Motor neuron (in vitro differentiated cells): ENCODE measurements at regions of chr1 and their contacts with region 1.

Region 1: GRCh38 chr1:165933446-165934178 is 106.2 kb downstream of the UCK2 start:
- ATAC-seq: no peak
- H3K4me3 ChIP-seq: no peak overlapping the region
- H3K27ac ChIP-seq: no peak overlapping the region
- H3K4me1 ChIP-seq: no peaks in the 10 kb centered on the region

Region 2: DNA sequence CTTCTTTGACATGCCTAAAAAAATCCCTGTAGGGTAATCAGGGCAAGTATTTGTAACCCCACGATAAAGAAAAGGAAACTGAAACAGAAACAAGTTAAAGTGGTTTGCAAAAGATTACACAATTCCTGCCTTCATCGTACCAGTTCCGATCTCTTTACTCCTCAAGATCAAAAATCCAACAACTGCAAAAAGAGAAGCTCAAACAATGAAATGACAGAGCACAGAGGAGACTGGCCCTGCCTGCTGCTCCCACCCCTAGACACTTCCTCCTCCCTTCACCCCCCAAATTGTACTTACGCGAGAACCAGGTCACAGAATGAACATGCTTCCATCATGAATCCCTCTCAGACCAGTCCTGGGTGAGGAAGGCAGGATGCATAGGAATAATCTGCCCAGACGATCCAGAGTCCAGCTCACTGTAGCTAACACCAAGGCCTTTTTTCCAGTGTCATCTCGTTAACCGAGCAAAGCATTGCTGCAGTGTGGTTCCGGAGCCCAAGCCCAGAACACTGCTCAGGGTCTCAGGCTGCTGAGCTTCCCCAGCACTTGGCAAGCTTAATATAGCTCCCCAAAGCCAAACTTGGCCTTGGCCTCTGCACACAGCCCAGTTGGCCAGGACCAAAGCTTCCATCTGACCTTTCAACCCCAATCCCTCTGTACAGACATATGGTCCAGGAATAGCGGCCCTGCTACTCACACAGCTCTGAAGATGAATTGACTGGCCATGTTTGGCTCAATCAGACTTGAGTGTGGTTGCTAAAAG is 509.0 kb before region 1 on chr1:
- in situ Hi-C with region 1: no loop called
- ATAC-seq: peak in 5 of 8 experiments; percentile 20 to 52 (median 51)
- H3K4me3 ChIP-seq: no peak overlapping the region
- H3K27ac ChIP-seq: peak overlapping the region in 1 of 2 donors; percentile 7
- H3K4me1 ChIP-seq: peaks cover 19 to 27% of the 10 kb centered on the region in 2 donors

Region 3: DNA sequence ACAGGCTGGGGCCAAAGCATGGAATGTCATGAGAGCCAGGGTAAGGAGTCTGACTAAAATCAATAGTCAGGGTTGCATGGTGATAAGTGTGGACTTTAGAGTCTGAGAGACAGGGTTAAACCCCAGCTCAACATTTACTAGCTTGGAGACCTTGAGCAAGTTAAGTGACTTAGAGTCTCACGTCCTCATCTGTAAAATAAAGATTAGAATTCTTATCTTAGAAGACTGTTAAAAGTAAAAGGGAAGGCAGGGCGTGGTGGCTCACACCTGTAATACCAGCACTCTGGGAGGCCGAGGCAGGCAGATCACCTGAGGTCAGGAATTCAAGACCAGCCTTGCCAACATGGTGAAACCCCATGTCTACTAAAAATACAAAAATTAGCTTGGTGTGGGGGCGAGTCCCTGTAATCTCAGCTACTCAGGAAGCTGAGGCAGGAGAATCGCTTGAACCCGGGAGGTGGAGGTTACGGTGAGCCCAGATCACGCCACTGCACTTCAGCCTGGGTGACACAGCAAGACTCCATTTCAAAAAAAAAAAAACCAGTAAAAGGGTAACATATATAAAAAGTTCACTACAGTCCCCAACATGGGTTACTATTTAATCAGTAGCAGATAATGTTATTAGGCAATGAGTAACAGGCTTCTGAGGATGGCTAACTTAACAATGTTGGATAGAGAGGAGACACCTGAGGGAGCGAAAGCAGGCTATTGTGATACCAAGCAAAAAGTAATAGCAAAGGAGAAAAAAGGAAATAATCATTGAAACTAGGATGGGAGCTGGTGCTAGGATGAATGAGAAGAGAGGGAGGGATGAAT is 185.8 kb before region 1 on chr1:
- in situ Hi-C with region 1: no loop called
- ATAC-seq: no peak
- H3K4me3 ChIP-seq: no peak overlapping the region
- H3K27ac ChIP-seq: no peak overlapping the region
- H3K4me1 ChIP-seq: no peaks in the 10 kb centered on the region

Region 4: DNA sequence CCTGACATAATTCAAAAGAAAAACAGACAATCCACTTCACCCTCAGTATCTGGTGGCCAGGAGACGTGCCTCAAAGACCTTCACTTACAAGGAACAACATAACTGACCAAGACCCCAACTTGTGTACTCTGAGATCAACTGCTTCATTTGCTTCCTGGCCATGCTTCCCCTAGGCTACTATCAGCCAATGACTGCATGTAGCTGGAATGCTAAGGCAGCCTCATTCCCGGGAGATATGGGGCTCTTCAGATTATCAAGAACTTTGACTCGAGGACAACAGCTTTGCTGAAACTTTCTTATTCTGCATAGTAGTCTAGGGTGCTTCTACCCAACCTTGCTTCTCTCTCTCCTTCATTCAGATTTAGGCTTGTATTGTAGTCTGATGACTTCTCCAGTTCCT is 117.9 kb before region 1 on chr1:
- in situ Hi-C with region 1: no loop called
- ATAC-seq: no peak
- H3K4me3 ChIP-seq: no peak overlapping the region
- H3K27ac ChIP-seq: no peak overlapping the region
- H3K4me1 ChIP-seq: no peaks in the 10 kb centered on the region

Region 5: DNA sequence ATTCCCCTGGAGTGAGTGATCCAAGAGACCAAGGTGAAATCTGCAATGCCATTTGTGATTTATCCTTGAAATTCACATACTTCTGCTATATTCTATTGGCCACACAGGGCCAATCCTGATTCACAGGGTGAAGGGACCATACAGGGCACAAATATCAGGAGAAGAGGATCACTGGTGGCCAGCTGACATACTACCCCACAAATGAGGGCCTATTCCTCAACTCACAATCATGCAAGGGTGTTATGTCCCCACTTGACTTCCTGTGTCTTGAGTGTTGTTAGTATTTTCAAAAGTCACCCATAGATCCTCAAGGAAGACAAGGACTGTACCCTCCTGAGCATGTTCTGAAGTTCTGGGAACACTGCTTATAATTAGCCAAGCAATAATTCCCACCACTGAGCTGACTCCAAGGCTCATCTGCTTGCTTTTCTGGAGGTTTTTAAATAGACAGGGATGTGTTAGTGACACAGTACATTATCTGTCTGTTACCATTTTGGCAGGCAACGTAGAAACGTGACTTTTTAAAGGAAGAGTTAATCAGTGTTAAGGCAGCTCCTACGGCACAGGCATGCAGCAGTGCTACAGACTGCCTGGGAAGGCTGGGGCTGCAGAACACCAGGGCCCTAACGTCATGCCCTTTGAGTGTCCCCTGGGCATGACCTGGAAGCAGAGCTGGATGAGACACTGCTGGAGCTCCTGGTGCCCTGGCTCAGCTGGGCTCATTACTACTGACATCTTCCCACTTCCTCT is 95.8 kb after region 1 on chr1:
- in situ Hi-C with region 1: no loop called
- ATAC-seq: no peak
- H3K4me3 ChIP-seq: no peak overlapping the region
- H3K27ac ChIP-seq: no peak overlapping the region
- H3K4me1 ChIP-seq: peaks cover 0 to 12% of the 10 kb centered on the region in 2 donors

Region 6: DNA sequence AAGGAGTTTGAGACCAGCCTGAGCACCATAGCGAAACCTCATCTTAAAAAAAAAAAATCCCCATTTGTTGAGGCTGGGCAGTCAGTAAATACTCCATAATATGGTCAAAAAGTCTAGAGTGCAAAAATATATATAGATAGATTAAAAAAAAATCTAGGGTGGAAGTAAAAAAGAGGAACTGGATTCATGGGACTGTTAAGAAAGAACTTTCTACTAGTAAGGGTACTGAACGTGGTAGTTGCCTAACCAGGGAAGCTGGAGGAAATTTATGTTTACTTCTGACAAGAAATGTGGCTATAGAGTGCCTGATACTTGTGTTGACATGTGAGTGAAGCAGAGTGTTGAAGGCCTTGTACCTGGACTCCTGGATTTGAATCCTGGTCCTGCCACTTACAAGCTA is 499.0 kb after region 1 on chr1:
- in situ Hi-C with region 1: loop called in 2 of 9 experiments (anchors 10 to 25 kb)
- ATAC-seq: no peak
- H3K4me3 ChIP-seq: no peak overlapping the region
- H3K27ac ChIP-seq: no peak overlapping the region
- H3K4me1 ChIP-seq: no peaks in the 10 kb centered on the region

Region 7: GRCh38 chr1:166479052-166479631 is 545.5 kb after region 1 on chr1:
- in situ Hi-C with region 1: loop called in 6 of 9 experiments (anchors 10 to 25 kb)
- ATAC-seq: peak in 2 of 8 experiments; percentile 32 to 58
- H3K4me3 ChIP-seq: no peak overlapping the region
- H3K27ac ChIP-seq: no peak overlapping the region
- H3K4me1 ChIP-seq: no peaks in the 10 kb centered on the region

Region 8: GRCh38 chr1:166489670-166490436 is 556.2 kb after region 1 on chr1:
- in situ Hi-C with region 1: loop called in 4 of 9 experiments (anchors 10 to 25 kb)
- ATAC-seq: peak in 3 of 8 experiments; percentile 47 to 81 (median 81)
- H3K4me3 ChIP-seq: no peak overlapping the region
- H3K27ac ChIP-seq: no peak overlapping the region
- H3K4me1 ChIP-seq: no peaks in the 10 kb centered on the region